Activated B cell treated with CpG ODN at 0.5 μM for 24 hours (primary cell): ENCODE measurements at regions of chrX and their contacts with region 1.

Region 1: GRCh38 chrX:68415316-68415715 is 18.0 kb downstream of the OPHN1 start:
- DNase-seq: no peak
- ATAC-seq: no peak
- H3K4me3 Mint-ChIP-seq: no peak overlapping the region
- H3K27ac Mint-ChIP-seq: no peak overlapping the region
- H3K4me1 Mint-ChIP-seq: no peaks in the 10 kb centered on the region
- H3K27me3 Mint-ChIP-seq: no peaks in the 10 kb centered on the region
- CTCF ChIP-seq: no peak

Region 2: GRCh38 chrX:68354869-68355852 is 60.2 kb before region 1 on chrX:
- CTCF ChIA-PET with region 1: no interaction called
- POLR2A ChIA-PET with region 1: no interaction called
- intact Hi-C with region 1: loop called (anchors 10 kb)
- DNase-seq: no peak
- ATAC-seq: no peak
- H3K4me3 Mint-ChIP-seq: no peak overlapping the region
- H3K27ac Mint-ChIP-seq: no peak overlapping the region
- H3K4me1 Mint-ChIP-seq: no peaks in the 10 kb centered on the region
- H3K27me3 Mint-ChIP-seq: no peaks in the 10 kb centered on the region
- CTCF ChIP-seq: no peak

Region 3: GRCh38 chrX:68584221-68584620 is 168.9 kb after region 1 on chrX:
- CTCF ChIA-PET with region 1: no interaction called
- POLR2A ChIA-PET with region 1: no interaction called
- intact Hi-C with region 1: no loop called
- DNase-seq: no peak
- ATAC-seq: no peak
- H3K4me3 Mint-ChIP-seq: no peak overlapping the region
- H3K27ac Mint-ChIP-seq: no peak overlapping the region
- H3K4me1 Mint-ChIP-seq: no peaks in the 10 kb centered on the region
- H3K27me3 Mint-ChIP-seq: no peaks in the 10 kb centered on the region
- CTCF ChIP-seq: no peak

Region 4: GRCh38 chrX:69060631-69061408 is 645.5 kb after region 1 on chrX:
- CTCF ChIA-PET with region 1: no interaction called
- POLR2A ChIA-PET with region 1: no interaction called
- intact Hi-C with region 1: no loop called
- DNase-seq: no peak
- ATAC-seq: no peak
- H3K4me3 Mint-ChIP-seq: no peak overlapping the region
- H3K27ac Mint-ChIP-seq: no peak overlapping the region
- H3K4me1 Mint-ChIP-seq: no peaks in the 10 kb centered on the region
- H3K27me3 Mint-ChIP-seq: no peaks in the 10 kb centered on the region
- CTCF ChIP-seq: no peak